CD8-positive, alpha-beta T cell (primary cell): ENCODE measurements at regions of chr1 and their contacts with region 1.

Region 1: DNA sequence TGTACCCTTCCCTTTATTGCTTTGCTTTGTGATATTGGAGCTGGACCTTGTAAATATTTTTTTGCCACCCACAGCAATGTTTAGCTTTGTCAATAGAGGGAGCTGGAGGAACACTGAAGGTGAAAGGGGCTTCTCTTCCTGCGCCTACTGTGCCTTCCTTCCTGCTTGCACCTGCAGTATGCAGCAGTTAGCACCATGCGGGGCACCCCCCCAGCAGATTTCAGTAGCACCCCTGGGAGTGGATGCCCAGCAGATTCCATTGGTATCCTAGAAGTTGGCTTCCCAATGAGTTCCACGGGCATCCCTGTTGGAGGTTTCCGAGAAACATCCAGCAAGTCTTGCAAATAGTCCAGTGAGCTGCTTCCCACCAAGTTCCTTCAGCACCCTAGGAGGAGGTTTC is 25.6 kb downstream of the S100A10 start:
- DNase-seq: peak in 7 of 9 experiments; percentile 42 to 85 (median 59)
- ATAC-seq: peak; percentile 99
- H3K4me3 ChIP-seq: no peak overlapping the region
- H3K4me3 Mint-ChIP-seq: no peak overlapping the region
- H3K27ac ChIP-seq: no peak overlapping the region
- H3K27ac Mint-ChIP-seq: no peak overlapping the region
- H3K4me1 ChIP-seq: peaks cover 5% of the 10 kb centered on the region
- H3K4me1 Mint-ChIP-seq: peaks cover 4% of the 10 kb centered on the region
- H3K27me3 ChIP-seq: no peaks in the 10 kb centered on the region
- H3K27me3 Mint-ChIP-seq: no peaks in the 10 kb centered on the region
- CTCF ChIP-seq: peak; percentile 87

Region 2: GRCh38 chr1:151898513-151898991 is 69.5 kb before region 1 on chr1:
- CTCF ChIA-PET with region 1: interaction called, 12 read pairs
- POLR2A ChIA-PET with region 1: no interaction called
- intact Hi-C with region 1: no loop called
- DNase-seq: peak; percentile 25 to 82 (median 68)
- ATAC-seq: peak; percentile 87
- H3K4me3 ChIP-seq: peak overlapping the region; percentile 15 to 17
- H3K4me3 Mint-ChIP-seq: peak overlapping the region; percentile 78
- H3K27ac ChIP-seq: peak overlapping the region; percentile 36 to 60
- H3K27ac Mint-ChIP-seq: peak overlapping the region; percentile 98
- H3K4me1 ChIP-seq: peaks cover 45% of the 10 kb centered on the region
- H3K4me1 Mint-ChIP-seq: peaks cover 68% of the 10 kb centered on the region
- H3K27me3 ChIP-seq: no peaks in the 10 kb centered on the region
- H3K27me3 Mint-ChIP-seq: no peaks in the 10 kb centered on the region
- CTCF ChIP-seq: no peak

Region 3: GRCh38 chr1:151953409-151954094 is 14.5 kb before region 1 on chr1:
- CTCF ChIA-PET with region 1: interaction called, 27 read pairs
- POLR2A ChIA-PET with region 1: interaction called, 3 read pairs
- intact Hi-C with region 1: no loop called
- DNase-seq: no peak
- ATAC-seq: no peak
- H3K4me3 ChIP-seq: no peak overlapping the region
- H3K4me3 Mint-ChIP-seq: no peak overlapping the region
- H3K27ac ChIP-seq: no peak overlapping the region
- H3K27ac Mint-ChIP-seq: no peak overlapping the region
- H3K4me1 ChIP-seq: no peaks in the 10 kb centered on the region
- H3K4me1 Mint-ChIP-seq: no peaks in the 10 kb centered on the region
- H3K27me3 ChIP-seq: no peaks in the 10 kb centered on the region
- H3K27me3 Mint-ChIP-seq: no peaks in the 10 kb centered on the region
- CTCF ChIP-seq: no peak

Region 4: GRCh38 chr1:152001391-152002249 is 33.6 kb after region 1 on chr1:
- CTCF ChIA-PET with region 1: interaction called, 665 read pairs
- POLR2A ChIA-PET with region 1: interaction called, 12 read pairs
- intact Hi-C with region 1: loop called (anchors 1 kb)
- DNase-seq: peak; percentile 59 to 85 (median 79)
- ATAC-seq: peak; percentile 83
- H3K4me3 ChIP-seq: no peak overlapping the region
- H3K4me3 Mint-ChIP-seq: no peak overlapping the region
- H3K27ac ChIP-seq: no peak overlapping the region
- H3K27ac Mint-ChIP-seq: no peak overlapping the region
- H3K4me1 ChIP-seq: no peaks in the 10 kb centered on the region
- H3K4me1 Mint-ChIP-seq: no peaks in the 10 kb centered on the region
- H3K27me3 ChIP-seq: no peaks in the 10 kb centered on the region
- H3K27me3 Mint-ChIP-seq: peaks cover 8% of the 10 kb centered on the region
- CTCF ChIP-seq: peak; percentile 91

Region 5: GRCh38 chr1:152189657-152190442 is 221.8 kb after region 1 on chr1:
- CTCF ChIA-PET with region 1: interaction called, 4 read pairs
- POLR2A ChIA-PET with region 1: no interaction called
- intact Hi-C with region 1: loop called (anchors 5 to 10 kb)
- DNase-seq: peak; percentile 25 to 81 (median 67)
- ATAC-seq: peak; percentile 71
- H3K4me3 ChIP-seq: peak overlapping the region; percentile 78 to 87
- H3K4me3 Mint-ChIP-seq: peak overlapping the region; percentile 78
- H3K27ac ChIP-seq: no peak overlapping the region
- H3K27ac Mint-ChIP-seq: peak overlapping the region; percentile 34
- H3K4me1 ChIP-seq: no peaks in the 10 kb centered on the region
- H3K4me1 Mint-ChIP-seq: peaks cover 4% of the 10 kb centered on the region
- H3K27me3 ChIP-seq: no peaks in the 10 kb centered on the region
- H3K27me3 Mint-ChIP-seq: peaks cover 2% of the 10 kb centered on the region
- CTCF ChIP-seq: peak; percentile 87